ENCODE measurements at regions of chr5 and their contacts with region 1.

Region 1: GRCh38 chr5:53035868-53036381 is 46.8 kb downstream of the ITGA2 start:
- DNase-seq: peak; percentile 66
- ATAC-seq: no peak
- H3K4me3 ChIP-seq: no peak overlapping the region
- H3K27ac ChIP-seq: no peak overlapping the region
- H3K4me1 ChIP-seq: peaks cover 19% of the 10 kb centered on the region
- H3K27me3 ChIP-seq: no peaks in the 10 kb centered on the region
- CTCF ChIP-seq: peak; percentile 35
- POLR2A ChIP-seq: no peak
- RAD21 ChIP-seq: no peak

Region 2: DNA sequence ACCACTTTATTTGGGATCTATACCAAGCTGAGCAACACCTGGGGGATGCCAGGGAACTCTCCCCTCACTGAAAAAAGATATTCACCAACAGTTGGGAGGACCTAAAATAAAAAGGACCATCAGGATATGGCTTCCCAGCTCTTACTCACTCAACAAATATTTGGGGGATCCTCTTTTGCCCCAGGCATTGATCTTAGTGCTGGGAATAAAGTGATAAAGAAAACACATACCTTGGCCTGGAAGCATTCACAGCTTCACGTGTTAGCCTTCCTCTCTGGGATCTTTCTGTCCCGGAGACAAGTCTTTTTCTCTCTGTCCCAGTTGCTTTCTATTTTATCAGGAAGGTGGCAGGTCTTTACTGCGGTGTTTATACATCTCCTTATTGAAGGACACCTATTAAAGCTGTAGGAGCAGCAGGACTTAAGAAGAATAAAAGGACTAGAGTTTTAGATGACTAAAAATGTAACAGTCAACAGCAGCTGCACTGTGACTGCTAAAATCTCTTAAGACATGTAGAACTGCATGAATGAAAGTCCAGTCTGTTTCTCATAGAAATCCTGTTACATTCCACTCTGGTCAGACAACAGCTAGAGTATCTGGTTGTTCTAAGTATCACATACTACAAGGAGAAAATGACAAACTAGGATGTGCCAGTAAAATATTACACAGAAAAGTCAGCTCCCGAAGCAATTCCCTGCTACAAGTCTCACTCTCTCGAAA is 136.8 kb before region 1 on chr5:
- CTCF ChIA-PET with region 1: no interaction called
- POLR2A ChIA-PET with region 1: no interaction called
- dilution Hi-C with region 1: no loop called
- in situ Hi-C with region 1: no loop called
- intact Hi-C with region 1: no loop called
- DNase-seq: no peak
- ATAC-seq: no peak
- H3K4me3 ChIP-seq: no peak overlapping the region
- H3K27ac ChIP-seq: no peak overlapping the region
- H3K4me1 ChIP-seq: peaks cover 6% of the 10 kb centered on the region
- H3K27me3 ChIP-seq: no peaks in the 10 kb centered on the region
- CTCF ChIP-seq: no peak
- POLR2A ChIP-seq: no peak
- RAD21 ChIP-seq: no peak

Region 3: GRCh38 chr5:52989781-52990527 is 46.0 kb before region 1 on chr5:
- CTCF ChIA-PET with region 1: no interaction called
- POLR2A ChIA-PET with region 1: interaction called, 8 read pairs
- dilution Hi-C with region 1: no loop called
- in situ Hi-C with region 1: no loop called
- intact Hi-C with region 1: loop called (anchors 2 kb)
- DNase-seq: peak; percentile 60
- ATAC-seq: peak; percentile 47
- H3K4me3 ChIP-seq: peak overlapping the region; percentile 93
- H3K27ac ChIP-seq: peak overlapping the region; percentile 56
- H3K4me1 ChIP-seq: peaks cover 16% of the 10 kb centered on the region; the same call in 1 of the 2 replicates
- H3K27me3 ChIP-seq: no peaks in the 10 kb centered on the region
- CTCF ChIP-seq: peak; percentile 50
- POLR2A ChIP-seq: no peak
- RAD21 ChIP-seq: peak; percentile 63

Region 4: GRCh38 chr5:53023969-53024368 is 12.0 kb before region 1 on chr5:
- CTCF ChIA-PET with region 1: interaction called, 12 read pairs
- POLR2A ChIA-PET with region 1: interaction called, 3 read pairs
- dilution Hi-C with region 1: no loop called
- in situ Hi-C with region 1: no loop called
- intact Hi-C with region 1: no loop called
- DNase-seq: peak; percentile 95
- ATAC-seq: peak; percentile 50
- H3K4me3 ChIP-seq: no peak overlapping the region
- H3K27ac ChIP-seq: peak overlapping the region; percentile 47; the same call in 1 of the 2 replicates
- H3K4me1 ChIP-seq: peaks cover 29% of the 10 kb centered on the region
- H3K27me3 ChIP-seq: no peaks in the 10 kb centered on the region
- CTCF ChIP-seq: no peak
- POLR2A ChIP-seq: no peak
- RAD21 ChIP-seq: no peak

Region 5: GRCh38 chr5:53123702-53124101 is 87.8 kb after region 1 on chr5:
- CTCF ChIA-PET with region 1: no interaction called
- POLR2A ChIA-PET with region 1: no interaction called
- dilution Hi-C with region 1: no loop called
- in situ Hi-C with region 1: no loop called
- intact Hi-C with region 1: no loop called
- DNase-seq: peak; percentile 40
- ATAC-seq: peak; percentile 36; the same call in 1 of the 2 replicates
- H3K4me3 ChIP-seq: no peak overlapping the region
- H3K27ac ChIP-seq: no peak overlapping the region
- H3K4me1 ChIP-seq: peaks cover 5% of the 10 kb centered on the region; the same call in 1 of the 2 replicates
- H3K27me3 ChIP-seq: no peaks in the 10 kb centered on the region; the same call in 1 of the 2 replicates
- CTCF ChIP-seq: peak; percentile 41
- POLR2A ChIP-seq: no peak
- RAD21 ChIP-seq: peak; percentile 46

Region 6: GRCh38 chr5:53246042-53246836 is 210.3 kb after region 1 on chr5:
- CTCF ChIA-PET with region 1: no interaction called
- POLR2A ChIA-PET with region 1: no interaction called
- dilution Hi-C with region 1: no loop called
- in situ Hi-C with region 1: no loop called
- intact Hi-C with region 1: no loop called
- DNase-seq: peak; percentile 94
- ATAC-seq: peak; percentile 63
- H3K4me3 ChIP-seq: no peak overlapping the region
- H3K27ac ChIP-seq: peak overlapping the region; percentile 10; the same call in 1 of the 2 replicates
- H3K4me1 ChIP-seq: peaks cover 12% of the 10 kb centered on the region
- H3K27me3 ChIP-seq: no peaks in the 10 kb centered on the region
- CTCF ChIP-seq: no peak
- POLR2A ChIP-seq: no peak
- RAD21 ChIP-seq: no peak